RWPE1 (cell line): ENCODE measurements at regions of chr2 and their contacts with region 1.

Region 1: DNA sequence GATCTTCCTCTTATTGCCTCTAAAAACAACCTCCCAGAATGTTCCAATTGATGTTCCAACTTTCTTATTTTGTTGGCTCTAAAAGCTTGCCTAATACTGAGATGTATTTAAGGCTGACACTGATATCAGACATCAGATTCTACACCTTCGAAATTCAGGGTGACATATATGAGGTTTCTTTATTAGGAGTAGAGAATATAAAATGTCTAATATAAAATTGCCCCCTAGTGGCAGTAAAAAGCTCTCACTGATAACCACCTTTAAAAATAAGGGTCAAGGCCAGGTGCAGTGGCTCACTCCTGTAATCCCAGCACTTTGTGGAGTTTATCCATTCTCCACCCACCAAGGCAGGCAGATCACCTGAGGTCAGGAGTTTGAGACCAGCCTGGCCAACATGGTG is 789.7 kb upstream of the SLC39A10 start:
- DNase-seq: peak; percentile 9
- H3K27ac ChIP-seq: no peak overlapping the region
- CTCF ChIP-seq: peak; percentile 48; the same call in 1 of the 2 replicates

Region 2: GRCh38 chr2:194674043-194674442 is 193.3 kb before region 1 on chr2:
- CTCF ChIA-PET with region 1: no interaction called
- POLR2A ChIA-PET with region 1: no interaction called
- DNase-seq: no peak
- H3K27ac ChIP-seq: no peak overlapping the region
- CTCF ChIP-seq: no peak

Region 3: GRCh38 chr2:194883711-194884110 is 16.4 kb after region 1 on chr2:
- CTCF ChIA-PET with region 1: interaction called, 11 read pairs
- POLR2A ChIA-PET with region 1: no interaction called
- DNase-seq: no peak
- H3K27ac ChIP-seq: no peak overlapping the region
- CTCF ChIP-seq: no peak

Region 4: DNA sequence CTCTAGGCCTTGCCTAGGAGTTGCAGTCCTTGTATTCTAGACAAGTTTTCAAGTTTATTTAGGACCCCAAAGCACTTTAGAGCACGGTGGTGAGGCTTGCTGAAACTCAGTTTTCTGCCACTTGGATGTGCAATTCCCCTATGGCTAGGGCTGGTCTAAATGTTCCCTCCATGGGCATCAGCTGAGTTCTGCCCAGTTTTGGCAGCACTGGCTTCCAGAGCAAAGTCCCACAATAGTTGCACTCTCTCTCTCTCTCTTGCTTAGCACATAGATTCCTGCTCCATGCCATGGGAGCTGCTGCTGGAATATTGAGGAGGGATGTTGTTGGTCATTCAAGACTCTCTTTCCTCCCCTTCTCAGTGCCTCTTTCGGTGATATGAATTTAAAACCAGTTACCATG is 29.5 kb after region 1 on chr2:
- CTCF ChIA-PET with region 1: no interaction called
- POLR2A ChIA-PET with region 1: no interaction called
- DNase-seq: no peak
- H3K27ac ChIP-seq: no peak overlapping the region
- CTCF ChIP-seq: no peak

Region 5: DNA sequence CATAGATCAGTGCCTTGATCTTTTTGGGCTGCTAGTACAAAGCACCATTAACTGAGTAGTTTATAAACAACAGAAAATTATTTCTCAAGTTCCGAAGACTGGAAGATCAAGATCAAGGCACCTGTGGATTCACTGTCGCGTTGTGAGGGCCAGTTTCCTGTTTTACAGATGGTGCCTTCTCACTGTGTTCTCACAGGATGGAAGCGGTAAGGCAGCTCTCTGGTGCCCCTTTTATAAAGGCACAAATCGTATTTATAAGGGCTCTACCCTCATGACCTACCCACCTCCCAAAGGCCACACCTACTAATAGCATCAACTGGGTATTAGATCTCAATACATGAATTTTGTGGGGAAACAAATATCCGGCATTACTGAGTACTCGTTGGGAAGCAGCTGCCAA is 60.2 kb after region 1 on chr2:
- CTCF ChIA-PET with region 1: no interaction called
- POLR2A ChIA-PET with region 1: no interaction called
- DNase-seq: no peak
- H3K27ac ChIP-seq: no peak overlapping the region
- CTCF ChIP-seq: no peak